ENCODE measurements at regions of chr5 and their contacts with region 1.

Region 1: DNA sequence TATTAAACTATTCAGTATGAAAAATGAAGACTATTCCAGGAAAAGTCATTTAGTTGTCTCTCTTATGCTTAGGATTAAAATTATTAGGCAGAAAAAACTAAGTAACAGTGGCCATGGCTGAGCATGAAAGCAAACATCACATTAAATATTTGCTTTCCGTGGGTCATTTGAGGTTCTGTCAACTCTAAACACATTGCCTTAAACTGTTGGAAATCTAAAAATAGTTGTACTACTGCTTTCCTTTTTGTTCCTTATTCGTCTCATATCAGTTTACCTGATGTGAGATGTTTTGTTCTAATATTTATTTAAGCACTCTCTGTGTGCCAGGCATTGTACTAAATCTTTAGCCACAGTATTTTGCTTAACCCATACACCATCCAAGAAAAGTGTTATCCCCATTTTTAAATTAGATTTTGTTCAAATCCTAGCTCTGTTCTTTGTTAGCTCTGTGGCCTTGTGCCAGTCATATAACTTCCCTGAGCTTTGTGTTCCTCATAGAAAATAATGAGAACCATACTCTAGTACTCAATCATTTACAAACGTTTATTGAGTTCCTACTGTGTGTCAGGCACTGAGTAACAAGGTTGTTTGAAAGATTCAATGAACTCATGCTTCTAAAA is 18.7 kb upstream of the ZNF608 start:
- DNase-seq: no peak
- ATAC-seq: no peak
- H3K4me3 ChIP-seq: no peak overlapping the region
- H3K27ac ChIP-seq: no peak overlapping the region
- H3K4me1 ChIP-seq: peaks cover 0 to 5% (median 0%) of the 10 kb centered on the region in 12 donors
- H3K27me3 ChIP-seq: no peaks in the 10 kb centered on the region
- CTCF ChIP-seq: no peak
- POLR2A ChIP-seq: no peak

Region 2: GRCh38 chr5:123813937-123814624 is 951.0 kb before region 1 on chr5:
- intact Hi-C with region 1: loop called in 1 of 10 experiments (anchors 5 kb)
- DNase-seq: no peak
- ATAC-seq: peak; percentile 45 to 65 (median 52)
- H3K4me3 ChIP-seq: peak overlapping the region in 1 of 12 donors; percentile 4
- H3K27ac ChIP-seq: peak overlapping the region in 11 of 12 donors; percentile 11 to 74 (median 33)
- H3K4me1 ChIP-seq: peaks cover 9 to 44% (median 30%) of the 10 kb centered on the region in 12 donors
- H3K27me3 ChIP-seq: no peaks in the 10 kb centered on the region
- CTCF ChIP-seq: no peak
- POLR2A ChIP-seq: no peak